CD4-positive, alpha-beta T cell (primary cell): ENCODE measurements at regions of chr1 and their contacts with region 1.

Region 1: GRCh38 chr1:228541725-228542124 is 54.5 kb downstream of the RNF187 start:
- DNase-seq: no peak
- ATAC-seq: no peak
- H3K4me3 ChIP-seq: no peak overlapping the region
- H3K4me3 Mint-ChIP-seq: no peak overlapping the region
- H3K27ac ChIP-seq: no peak overlapping the region
- H3K27ac Mint-ChIP-seq: no peak overlapping the region
- H3K4me1 ChIP-seq: no peaks in the 10 kb centered on the region
- H3K4me1 Mint-ChIP-seq: no peaks in the 10 kb centered on the region
- H3K27me3 ChIP-seq: peaks cover 10 to 14% of the 10 kb centered on the region in 2 experiments
- H3K27me3 Mint-ChIP-seq: peaks cover 43% of the 10 kb centered on the region
- CTCF ChIP-seq: no peak

Region 2: DNA sequence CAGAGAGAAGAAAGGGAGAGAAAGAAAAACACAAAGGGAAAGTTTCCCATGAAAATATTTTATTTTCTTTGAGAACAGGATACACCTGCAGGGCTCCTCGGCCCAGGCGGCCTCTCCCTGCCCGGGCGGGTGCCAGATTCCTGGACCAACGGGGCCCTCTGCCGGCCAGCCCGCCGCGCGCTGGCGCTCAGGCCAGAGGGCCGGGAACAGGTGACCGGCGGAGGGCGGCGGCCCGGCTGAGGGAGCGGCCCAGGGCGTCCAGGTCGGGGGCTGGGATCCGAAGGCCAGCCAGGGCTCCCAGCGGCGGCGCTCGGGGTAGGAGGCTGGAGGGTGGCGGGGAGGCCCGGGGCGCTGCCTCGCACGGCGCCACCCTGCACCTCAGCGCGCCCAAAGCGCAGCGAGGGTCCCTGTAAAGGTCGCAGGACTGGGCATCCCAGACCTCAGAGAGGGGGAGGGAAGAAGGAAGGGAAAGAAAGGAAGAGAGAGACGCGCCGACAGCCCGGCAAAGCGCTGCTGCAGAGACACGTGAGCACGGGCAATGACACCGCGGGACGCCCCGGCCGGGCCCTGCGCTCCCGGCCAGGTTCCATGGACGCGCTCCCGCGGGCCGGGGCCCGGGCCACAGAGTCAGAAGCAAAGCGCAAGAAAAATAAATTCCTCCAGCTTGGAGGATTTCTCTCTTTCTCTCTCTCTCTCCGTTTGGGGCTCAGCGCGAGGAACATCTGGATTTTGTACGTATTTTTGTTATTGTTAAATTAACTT is 594.9 kb before region 1 on chr1:
- CTCF ChIA-PET with region 1: no interaction called
- POLR2A ChIA-PET with region 1: no interaction called
- intact Hi-C with region 1: no loop called
- DNase-seq: peak in 13 of 14 experiments; percentile 35 to 75 (median 52)
- ATAC-seq: peak; percentile 71
- H3K4me3 ChIP-seq: peak overlapping the region; percentile 33
- H3K4me3 Mint-ChIP-seq: peak overlapping the region; percentile 72
- H3K27ac ChIP-seq: no peak overlapping the region
- H3K27ac Mint-ChIP-seq: no peak overlapping the region
- H3K4me1 ChIP-seq: peaks cover 22% of the 10 kb centered on the region
- H3K4me1 Mint-ChIP-seq: no peaks in the 10 kb centered on the region
- H3K27me3 ChIP-seq: peaks cover 13 to 19% of the 10 kb centered on the region in 2 experiments
- H3K27me3 Mint-ChIP-seq: peaks cover 19% of the 10 kb centered on the region
- CTCF ChIP-seq: peak; percentile 87

Region 3: DNA sequence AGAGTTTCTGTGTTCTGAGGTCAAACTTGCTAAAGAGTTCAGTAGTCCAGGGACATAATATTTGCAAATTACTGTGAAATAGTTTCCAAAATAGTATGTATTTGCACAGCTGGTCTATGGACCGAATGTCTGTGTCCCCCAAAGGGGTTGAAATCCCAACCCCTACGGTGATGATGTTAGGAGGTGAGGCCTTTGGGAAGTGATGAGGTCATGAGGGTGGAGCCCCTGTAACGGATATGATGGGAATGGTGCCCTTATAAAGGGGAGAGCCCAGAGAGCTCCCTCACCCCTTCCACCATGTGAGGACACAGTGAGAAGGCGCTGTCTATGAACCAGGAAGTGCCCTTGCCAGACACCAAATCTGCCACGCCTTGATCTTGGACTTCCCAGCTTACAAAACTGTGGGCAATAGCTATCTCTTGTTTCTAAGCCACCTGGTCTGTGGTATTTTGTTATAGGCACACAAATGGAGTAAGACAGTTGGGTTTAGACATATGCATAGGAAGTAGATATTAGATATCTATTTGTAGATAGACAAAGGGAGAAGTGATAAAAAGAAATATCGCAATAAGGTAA is 32.8 kb before region 1 on chr1:
- CTCF ChIA-PET with region 1: no interaction called
- POLR2A ChIA-PET with region 1: no interaction called
- intact Hi-C with region 1: loop called in 1 of 2 experiments (anchors 1 kb)
- DNase-seq: no peak
- ATAC-seq: no peak
- H3K4me3 ChIP-seq: no peak overlapping the region
- H3K4me3 Mint-ChIP-seq: no peak overlapping the region
- H3K27ac ChIP-seq: no peak overlapping the region
- H3K27ac Mint-ChIP-seq: no peak overlapping the region
- H3K4me1 ChIP-seq: peaks cover 14% of the 10 kb centered on the region
- H3K4me1 Mint-ChIP-seq: peaks cover 12% of the 10 kb centered on the region
- H3K27me3 ChIP-seq: peaks cover 0 to 3% of the 10 kb centered on the region in 2 experiments
- H3K27me3 Mint-ChIP-seq: no peaks in the 10 kb centered on the region
- CTCF ChIP-seq: no peak